GM13976 (cell line): ENCODE measurements at regions of chr9 and their contacts with region 1.

Region 1: GRCh38 chr9:28073270-28073669 is 500.0 kb upstream of the C9orf72 start:
- DNase-seq: peak; percentile 3
- CTCF ChIP-seq: no peak

Region 2: DNA sequence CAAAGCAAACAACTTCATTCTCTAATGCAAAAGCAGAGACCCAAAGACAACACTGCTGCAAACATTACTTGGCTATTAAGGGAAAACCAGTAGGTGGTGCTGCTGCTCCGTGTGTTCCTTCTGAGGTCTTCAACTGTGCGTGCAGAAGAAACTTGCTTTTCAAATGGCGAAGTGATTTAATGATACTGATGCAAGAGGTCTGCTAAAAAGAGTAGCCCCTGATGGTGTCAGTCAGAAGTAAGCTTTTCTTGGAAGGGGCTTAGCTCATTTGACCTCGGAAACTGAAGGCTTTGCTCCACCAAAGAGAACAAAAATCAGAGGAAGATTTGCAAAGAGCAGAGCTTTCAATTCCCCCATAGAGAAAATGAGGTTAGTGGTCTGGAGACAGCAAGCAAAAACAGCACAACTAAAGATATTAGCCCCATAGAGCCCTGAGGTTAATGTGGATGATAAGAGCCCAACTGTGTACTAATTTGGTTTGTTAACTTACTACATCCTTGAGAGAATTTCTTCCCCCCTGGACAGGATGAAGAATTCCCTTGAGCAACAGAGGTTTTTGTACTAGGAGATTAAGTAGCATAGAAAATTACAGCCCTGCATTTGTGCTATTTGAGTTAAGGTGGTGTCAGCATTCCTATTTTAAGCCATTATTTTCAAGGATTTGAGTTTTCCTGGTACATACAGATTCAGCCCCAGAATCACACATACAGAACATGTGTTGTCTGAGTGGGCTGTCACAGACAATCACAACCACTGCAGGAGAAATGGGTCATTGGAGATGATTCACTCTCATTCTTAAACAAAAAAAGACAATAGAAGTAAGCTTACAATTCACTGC is 346.8 kb before region 1 on chr9:
- in situ Hi-C with region 1: loop called (anchors 10 kb)
- DNase-seq: no peak
- CTCF ChIP-seq: peak; percentile 55

Region 3: DNA sequence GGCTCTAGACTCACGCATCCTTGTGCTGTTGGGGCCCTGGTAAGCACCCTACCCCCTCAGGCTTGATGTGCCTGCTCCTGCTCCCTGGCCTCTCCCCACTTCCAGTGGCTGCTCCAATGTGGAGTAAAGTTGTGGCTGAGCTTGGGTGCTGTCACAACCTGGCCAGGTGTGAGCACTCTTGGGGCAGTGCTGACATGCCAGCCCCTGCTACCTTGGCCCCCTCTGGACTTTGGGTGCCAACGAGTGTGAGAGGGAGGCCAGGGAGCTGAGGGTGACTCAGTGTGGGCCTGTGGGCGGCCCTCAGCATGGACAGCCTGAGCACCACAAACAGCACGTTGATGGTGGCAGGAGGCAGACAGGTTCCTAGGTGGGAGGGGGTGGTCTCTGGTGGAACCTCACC is 370.2 kb after region 1 on chr9:
- in situ Hi-C with region 1: no loop called
- DNase-seq: no peak
- CTCF ChIP-seq: no peak